ENCODE measurements at regions of chr5 and their contacts with region 1.

Region 1: DNA sequence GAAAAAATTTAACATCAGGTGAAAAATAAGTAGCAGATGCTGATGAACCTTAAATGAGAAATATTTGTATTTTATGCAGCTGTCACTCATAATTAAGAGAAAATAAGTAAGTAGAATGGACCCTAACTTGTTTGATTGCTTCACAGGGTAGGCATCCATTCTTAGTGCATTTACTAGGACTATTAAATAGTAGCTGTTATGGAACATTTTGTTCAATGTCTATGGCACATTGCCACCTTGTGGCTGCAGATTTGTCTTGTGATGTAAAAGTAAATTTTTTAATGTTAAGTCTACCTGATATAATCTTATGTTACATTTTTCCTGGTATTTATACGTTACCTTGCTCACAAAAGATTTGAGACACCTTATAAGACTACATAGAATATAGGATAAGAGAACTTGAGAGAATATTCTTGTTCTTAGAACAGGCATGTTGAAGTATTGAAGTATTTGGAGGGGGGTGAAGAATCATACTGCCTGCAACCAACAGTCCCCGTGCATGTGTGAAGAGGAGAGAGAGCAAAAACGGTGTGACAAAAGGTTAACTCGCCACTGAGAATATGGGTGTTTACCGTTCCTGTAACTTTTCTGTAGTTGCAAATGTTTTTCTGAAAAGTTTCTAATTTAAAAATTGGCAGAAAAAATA is 161.1 kb downstream of the MAST4 start:
- DNase-seq: peak; percentile 34
- H3K4me3 ChIP-seq: no peak overlapping the region
- H3K27ac ChIP-seq: no peak overlapping the region
- H3K4me1 ChIP-seq: no peaks in the 10 kb centered on the region
- H3K27me3 ChIP-seq: peaks cover 2% of the 10 kb centered on the region
- CTCF ChIP-seq: peak; percentile 32 to 56

Region 2: DNA sequence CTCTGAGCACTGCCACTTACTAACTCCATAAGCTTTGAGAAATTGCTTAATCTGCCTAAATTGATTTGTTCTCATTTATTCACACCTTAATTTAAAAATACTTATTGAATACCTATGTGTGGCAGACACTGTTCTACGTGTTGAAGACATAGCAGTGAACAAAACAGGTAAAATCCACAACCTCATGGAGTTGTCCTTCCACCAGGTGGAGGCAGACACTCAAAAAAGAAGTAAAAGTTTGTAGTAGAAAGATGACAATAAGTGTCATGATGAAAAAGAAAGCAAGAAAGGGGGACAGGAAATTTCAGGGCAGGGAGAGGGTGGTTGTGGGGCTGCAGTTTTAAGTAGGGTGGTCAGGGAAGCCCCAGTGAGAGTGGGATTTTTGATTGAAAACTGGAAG is 518.3 kb before region 1 on chr5:
- CTCF ChIA-PET with region 1: no interaction called
- dilution Hi-C with region 1: no loop called
- in situ Hi-C with region 1: no loop called
- intact Hi-C with region 1: loop called (anchors 2 kb)
- DNase-seq: peak; percentile 32
- H3K4me3 ChIP-seq: no peak overlapping the region
- H3K27ac ChIP-seq: no peak overlapping the region
- H3K4me1 ChIP-seq: no peaks in the 10 kb centered on the region
- H3K27me3 ChIP-seq: peaks cover 4% of the 10 kb centered on the region
- CTCF ChIP-seq: peak; percentile 30 to 52